Esophagus squamous epithelium (tissue), 5 donors: ENCODE measurements at regions of chr2 and their contacts with region 1.

Region 1: DNA sequence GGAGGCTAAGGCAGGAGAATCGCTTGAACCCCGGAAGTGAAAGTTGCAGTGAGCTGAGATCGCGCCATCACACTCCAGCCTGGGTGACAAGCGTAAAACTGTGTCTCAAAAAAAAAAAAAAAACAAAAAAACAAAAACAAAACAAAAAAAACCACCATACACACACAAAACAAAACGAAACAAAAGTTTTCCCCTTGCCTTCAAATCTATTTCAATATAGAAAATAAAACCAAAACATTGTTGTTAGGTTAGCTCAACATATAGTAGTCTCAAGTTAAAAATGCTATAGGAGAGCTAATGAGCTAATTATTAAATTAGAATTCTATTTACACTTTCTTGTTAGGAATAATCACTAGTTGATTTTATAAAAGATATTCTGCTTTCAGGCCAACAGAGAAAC is 43.3 kb downstream of the FBXO11 start:
- DNase-seq: no peak
- H3K4me3 ChIP-seq: no peak overlapping the region
- H3K27ac ChIP-seq: no peak overlapping the region
- H3K4me1 ChIP-seq: peaks cover 7 to 67% (median 9%) of the 10 kb centered on the region in 3 donors
- H3K27me3 ChIP-seq: no peaks in the 10 kb centered on the region
- CTCF ChIP-seq: no peak
- POLR2A ChIP-seq: no peak

Region 2: GRCh38 chr2:48107326-48107925 is 244.5 kb after region 1 on chr2:
- intact Hi-C with region 1: loop called (anchors 5 kb)
- DNase-seq: no peak
- H3K4me3 ChIP-seq: no peak overlapping the region
- H3K27ac ChIP-seq: peak overlapping the region in 3 of 4 donors; percentile 35 to 59 (median 57)
- H3K4me1 ChIP-seq: peaks cover 0 to 41% (median 22%) of the 10 kb centered on the region in 3 donors
- H3K27me3 ChIP-seq: no peaks in the 10 kb centered on the region
- CTCF ChIP-seq: peak in 1 of 6 experiments; percentile 18
- POLR2A ChIP-seq: no peak